Gastrocnemius medialis (tissue), 4 donors: ENCODE measurements at regions of chr3 and their contacts with region 1.

Region 1: DNA sequence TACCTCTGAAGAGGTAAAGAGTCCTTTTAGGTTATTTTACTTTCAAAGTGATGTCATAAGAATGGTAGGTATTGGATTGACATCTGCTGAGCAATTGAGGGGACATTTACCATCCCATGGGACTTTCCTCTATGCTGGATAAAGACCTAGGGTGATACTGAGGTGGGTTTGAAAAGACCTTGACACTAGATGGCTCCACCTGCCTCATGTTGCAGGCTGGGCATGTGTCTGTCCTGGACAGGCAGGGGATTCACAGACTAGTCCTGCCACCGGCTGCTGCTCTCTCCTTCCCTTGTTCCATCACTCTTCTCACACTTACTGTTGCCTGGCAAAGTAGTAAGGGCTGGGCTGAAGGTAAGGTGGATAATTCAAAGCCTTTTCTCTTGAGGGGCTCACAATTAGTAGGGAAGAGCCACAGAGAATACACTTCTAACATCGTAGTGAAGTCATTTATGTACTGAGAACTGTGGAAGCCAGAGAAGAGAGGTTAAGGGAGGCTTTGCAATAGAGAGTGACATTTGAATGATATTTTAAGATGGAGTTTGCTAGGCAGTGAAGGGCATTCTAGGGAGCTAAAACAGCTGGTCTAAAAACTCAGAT is 27.7 kb downstream of the TRAK1 start:
- DNase-seq: peak; percentile 31 to 71
- ATAC-seq: peak; percentile 47 to 55
- H3K4me3 ChIP-seq: no peak overlapping the region
- H3K27ac ChIP-seq: peak overlapping the region; percentile 82 to 90 (median 88)
- H3K4me1 ChIP-seq: peaks cover 82 to 86% of the 10 kb centered on the region in 2 donors
- H3K27me3 ChIP-seq: no peaks in the 10 kb centered on the region
- CTCF ChIP-seq: peak; percentile 29 to 64 (median 56)
- POLR2A ChIP-seq: no peak

Region 2: GRCh38 chr3:42184651-42185443 is 66.0 kb after region 1 on chr3:
- in situ Hi-C with region 1: loop called (anchors 5 kb)
- intact Hi-C with region 1: no loop called
- DNase-seq: no peak
- ATAC-seq: no peak
- H3K4me3 ChIP-seq: no peak overlapping the region
- H3K27ac ChIP-seq: peak overlapping the region in 2 of 4 donors; percentile 30 to 48
- H3K4me1 ChIP-seq: peaks cover 32 to 50% of the 10 kb centered on the region in 2 donors
- H3K27me3 ChIP-seq: no peaks in the 10 kb centered on the region
- CTCF ChIP-seq: no peak
- POLR2A ChIP-seq: no peak

Region 3: GRCh38 chr3:42190701-42191462 is 72.0 kb after region 1 on chr3:
- in situ Hi-C with region 1: loop called (anchors 5 kb)
- intact Hi-C with region 1: loop called (anchors 1 kb)
- DNase-seq: peak; percentile 50 to 57
- ATAC-seq: peak; percentile 70 to 81
- H3K4me3 ChIP-seq: no peak overlapping the region
- H3K27ac ChIP-seq: peak overlapping the region; percentile 25 to 56 (median 39)
- H3K4me1 ChIP-seq: peaks cover 17 to 29% of the 10 kb centered on the region in 2 donors
- H3K27me3 ChIP-seq: no peaks in the 10 kb centered on the region
- CTCF ChIP-seq: peak; percentile 77 to 91 (median 88)
- POLR2A ChIP-seq: no peak

Region 4: DNA sequence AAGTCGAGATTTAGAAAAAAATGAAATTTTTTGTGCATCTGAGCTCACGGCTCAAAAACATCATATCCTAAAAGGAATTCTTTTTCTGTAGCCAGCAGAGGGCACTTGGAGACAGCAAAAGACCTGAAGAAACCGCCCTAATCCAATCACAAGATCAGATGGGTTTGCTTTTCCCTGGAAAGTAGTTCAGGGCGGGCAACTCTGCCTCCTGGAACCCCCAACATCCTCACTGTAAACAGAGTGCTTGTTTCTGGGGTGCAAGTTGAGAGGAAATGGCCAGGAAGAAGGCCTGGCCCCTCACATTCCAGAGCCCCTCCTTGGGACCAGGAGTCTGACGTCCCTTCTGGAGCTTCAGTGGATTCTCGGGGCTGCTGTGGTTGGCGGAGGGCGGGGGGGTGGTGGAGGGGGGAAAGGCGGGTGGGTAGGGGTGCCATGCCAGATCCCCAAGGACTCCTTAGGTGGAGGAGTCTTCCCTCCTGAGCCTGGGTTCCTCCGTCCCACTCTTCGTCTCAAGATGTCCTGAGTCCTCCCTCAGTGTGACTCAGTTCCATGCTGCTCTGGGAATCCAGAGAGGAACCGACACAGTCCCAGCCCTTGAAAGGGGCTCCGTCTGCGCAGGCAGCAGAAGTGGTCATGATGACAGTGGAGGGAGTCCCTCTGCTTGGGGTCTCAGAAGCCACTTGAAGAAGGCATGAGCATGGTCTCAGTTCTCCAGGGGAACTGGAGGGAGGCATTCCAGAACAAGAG is 111.3 kb after region 1 on chr3:
- in situ Hi-C with region 1: no loop called
- intact Hi-C with region 1: loop called (anchors 2 kb)
- DNase-seq: no peak
- ATAC-seq: no peak
- H3K4me3 ChIP-seq: no peak overlapping the region
- H3K27ac ChIP-seq: no peak overlapping the region
- H3K4me1 ChIP-seq: peaks cover 18 to 20% of the 10 kb centered on the region in 2 donors
- H3K27me3 ChIP-seq: no peaks in the 10 kb centered on the region
- CTCF ChIP-seq: peak; percentile 38 to 61 (median 58)
- POLR2A ChIP-seq: no peak